AG04449 (cell line): ENCODE measurements at regions of chr14 and their contacts with region 1.

Region 1: GRCh38 chr14:21455911-21456667 is at the start of gene CHD8:
- DNase-seq: peak; percentile 96
- H3K4me3 ChIP-seq: peak within 1 kb of the TSS; percentile 87
- CTCF ChIP-seq: peak; percentile 69

Region 2: GRCh38 chr14:21346549-21347135 is 109.4 kb before region 1 on chr14:
- CTCF ChIA-PET with region 1: no interaction called
- POLR2A ChIA-PET with region 1: no interaction called
- DNase-seq: peak; percentile 5
- H3K4me3 ChIP-seq: no peak overlapping the region
- CTCF ChIP-seq: no peak

Region 3: DNA sequence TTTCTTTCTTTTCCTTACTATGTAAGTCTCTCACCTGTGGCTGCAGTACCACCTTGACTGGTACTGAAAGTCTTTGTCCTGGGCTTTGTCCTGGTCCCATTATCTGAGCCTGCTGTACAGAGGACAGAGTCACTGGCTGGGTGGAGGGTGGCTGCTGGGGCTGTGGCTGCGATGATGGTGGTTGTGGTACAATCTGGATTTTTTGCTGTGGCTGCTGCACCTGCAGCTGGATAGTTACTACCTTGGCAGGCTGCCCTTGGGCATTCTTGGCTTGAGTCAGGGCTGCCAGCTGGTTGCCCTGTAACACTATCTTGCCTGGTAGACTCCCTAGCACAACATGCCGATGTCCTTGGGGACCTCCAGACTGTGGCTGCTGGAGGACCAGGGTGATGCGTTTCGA is 27.2 kb before region 1 on chr14:
- CTCF ChIA-PET with region 1: interaction called, 11 read pairs
- POLR2A ChIA-PET with region 1: no interaction called
- DNase-seq: no peak
- H3K4me3 ChIP-seq: no peak overlapping the region
- CTCF ChIP-seq: no peak

Region 4: GRCh38 chr14:21437063-21437901 is 18.8 kb before region 1 on chr14:
- CTCF ChIA-PET with region 1: interaction called, 18 read pairs
- POLR2A ChIA-PET with region 1: interaction called, 14 read pairs
- DNase-seq: peak; percentile 93
- H3K4me3 ChIP-seq: peak overlapping the region; percentile 96
- CTCF ChIP-seq: no peak

Region 5: DNA sequence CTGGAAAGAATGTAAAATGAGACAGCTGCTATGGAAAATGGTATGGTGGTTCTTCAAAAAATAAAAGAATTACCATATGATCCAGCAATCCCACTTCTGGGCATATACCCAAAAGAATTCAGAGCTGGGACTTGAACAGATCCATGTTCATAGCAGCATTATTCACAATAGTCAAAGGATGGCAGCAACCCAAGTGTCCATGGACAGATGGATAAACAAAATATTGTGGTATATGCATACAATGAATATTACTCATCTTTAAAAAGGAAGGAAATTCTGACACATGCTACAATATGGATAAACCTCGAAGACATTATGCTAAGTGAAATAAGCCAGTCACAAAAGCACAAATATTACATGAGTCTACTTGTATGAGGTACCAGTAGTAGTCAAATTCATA is 11.5 kb after region 1 on chr14:
- CTCF ChIA-PET with region 1: interaction called, 52 read pairs
- POLR2A ChIA-PET with region 1: no interaction called
- DNase-seq: peak; percentile 91
- H3K4me3 ChIP-seq: no peak overlapping the region
- CTCF ChIP-seq: no peak

Region 6: GRCh38 chr14:21476925-21477681 is 21.0 kb after region 1 on chr14 and contains the starts of genes RAB2B and TOX4:
- CTCF ChIA-PET with region 1: interaction called, 22 read pairs
- POLR2A ChIA-PET with region 1: no interaction called
- DNase-seq: peak; percentile 94
- H3K4me3 ChIP-seq: peak within 1 kb of the TSS; percentile 94
- CTCF ChIP-seq: peak; percentile 97

Region 7: DNA sequence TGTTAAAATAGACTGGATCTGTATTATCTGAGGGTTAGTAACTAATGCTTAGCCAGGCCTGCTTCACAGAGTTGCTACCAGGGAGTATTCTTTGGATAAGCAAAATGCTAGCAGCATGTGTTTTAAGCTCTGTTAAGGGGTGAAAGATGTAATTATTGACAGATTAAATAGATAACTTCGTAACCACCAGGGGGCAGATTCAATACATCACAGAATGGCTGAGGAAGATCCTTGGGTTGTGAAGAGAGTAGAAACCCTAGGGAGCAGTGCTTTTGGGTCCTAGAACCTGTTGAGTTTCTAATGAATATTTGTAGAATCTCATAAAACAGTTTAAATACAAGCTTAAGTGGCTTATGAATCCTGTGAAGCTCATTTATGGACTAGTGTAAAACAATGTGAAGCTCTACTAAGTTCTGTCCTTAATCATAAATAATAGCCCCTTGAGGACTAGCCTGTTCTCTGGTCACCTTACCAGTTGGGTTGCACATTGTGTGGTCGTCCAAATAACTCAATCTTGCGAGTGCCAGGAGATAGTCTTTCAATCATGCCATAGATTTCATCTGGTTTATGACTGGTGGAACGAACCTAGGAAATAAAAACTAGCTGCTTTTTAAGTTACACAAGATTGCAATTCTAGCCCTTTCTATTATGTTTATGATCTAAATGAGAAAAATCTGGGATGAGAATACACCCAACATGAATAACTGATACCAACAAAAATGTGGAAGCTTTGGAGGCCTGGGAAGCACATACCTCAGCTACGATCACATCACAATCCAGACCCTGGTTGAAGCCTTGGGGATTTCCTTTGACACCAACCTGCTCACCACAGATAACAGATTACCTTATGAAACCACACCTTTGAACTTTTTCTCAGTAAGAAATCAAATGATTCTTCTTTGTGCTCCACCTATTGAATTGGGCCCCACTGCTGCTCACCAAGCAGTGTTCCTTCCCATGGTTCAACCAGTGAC is 42.8 kb after region 1 on chr14:
- CTCF ChIA-PET with region 1: interaction called, 21 read pairs
- POLR2A ChIA-PET with region 1: no interaction called
- DNase-seq: peak; percentile 19
- H3K4me3 ChIP-seq: no peak overlapping the region
- CTCF ChIP-seq: peak; percentile 33